Dendritic cell treated with granulocyte-macrophage colony-stimulating factor and Interleukin-4, amounts not matched to agents 40 ng/mL and 50 ng/mL, for 4 days (primary cell): ENCODE measurements at regions of chr11 and their contacts with region 1.

Region 1: DNA sequence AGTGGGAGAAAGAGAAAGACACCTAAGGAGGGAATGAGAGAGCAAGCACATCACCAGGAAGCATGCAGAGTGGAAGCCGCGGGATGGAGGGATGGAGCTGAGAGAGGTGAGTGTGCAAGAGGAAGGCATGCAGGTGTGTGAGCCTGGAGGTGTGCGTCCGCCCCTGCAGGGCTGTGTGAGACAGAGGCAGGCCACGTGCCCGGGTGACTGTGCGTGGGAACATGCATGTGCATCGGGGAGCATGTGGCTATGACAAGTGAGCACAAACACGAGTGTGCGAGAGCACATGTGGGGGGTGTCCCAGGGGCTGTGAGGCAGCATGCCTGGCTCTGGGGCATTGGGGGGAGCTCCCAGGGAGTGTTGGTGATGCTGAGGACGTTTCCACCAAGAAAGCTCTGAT is 29.9 kb downstream of the PTPN5 start:
- H3K4me3 Mint-ChIP-seq: no peak overlapping the region
- H3K27ac Mint-ChIP-seq: no peak overlapping the region
- H3K4me1 Mint-ChIP-seq: peaks cover 7% of the 10 kb centered on the region
- H3K27me3 Mint-ChIP-seq: peaks cover 15% of the 10 kb centered on the region

Region 2: GRCh38 chr11:18540207-18541009 is 221.3 kb before region 1 on chr11:
- intact Hi-C with region 1: loop called (anchors 5 kb)
- H3K4me3 Mint-ChIP-seq: no peak overlapping the region
- H3K27ac Mint-ChIP-seq: no peak overlapping the region
- H3K4me1 Mint-ChIP-seq: no peaks in the 10 kb centered on the region
- H3K27me3 Mint-ChIP-seq: no peaks in the 10 kb centered on the region